ENCODE measurements at regions of chr14 and their contacts with region 1.

Region 1: DNA sequence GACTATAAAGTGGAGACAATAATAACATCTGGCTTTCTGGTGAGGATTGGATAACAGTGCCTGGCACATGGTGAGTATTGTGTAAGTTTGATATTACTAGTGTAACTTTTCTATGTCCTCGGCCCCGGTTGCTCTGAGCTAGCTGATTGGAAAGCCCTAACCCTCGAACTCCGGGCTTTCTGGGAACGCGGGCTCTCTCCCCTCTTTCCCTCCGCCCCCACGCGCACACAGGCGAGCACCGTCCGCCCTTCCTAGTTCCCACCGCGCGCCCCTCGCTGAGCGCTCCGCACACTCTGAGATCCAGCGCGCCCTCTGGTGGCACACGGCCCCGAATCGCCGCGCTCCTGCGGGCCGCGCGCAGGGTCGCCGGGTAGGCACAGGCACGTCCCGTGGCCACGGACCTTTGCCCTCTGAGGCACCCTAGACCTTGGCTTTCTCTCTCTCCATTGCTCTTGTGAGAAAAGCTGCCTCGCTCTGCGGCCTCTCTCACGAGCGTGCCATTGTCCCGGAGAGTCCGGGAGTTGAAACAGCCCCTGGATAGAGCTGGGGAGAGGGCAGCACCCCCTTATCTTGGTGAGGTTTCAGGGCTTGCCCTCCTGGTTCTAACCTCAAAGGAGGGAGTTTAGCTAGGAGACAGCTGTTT is 23.2 kb upstream of the ESRRB start:
- DNase-seq: peak; percentile 52 to 88
- H3K4me3 ChIP-seq: peak overlapping the region; percentile 15 to 45 (median 30)
- H3K27ac ChIP-seq: no peak overlapping the region
- H3K4me1 ChIP-seq: peaks cover 0 to 9% (median 8%) of the 10 kb centered on the region in 4 donors
- H3K27me3 ChIP-seq: peaks cover 0 to 44% (median 7%) of the 10 kb centered on the region in 3 donors
- CTCF ChIP-seq: peak in 5 of 7 experiments; percentile 58 to 81 (median 66)
- EP300 ChIP-seq: no peak
- POLR2A ChIP-seq: no peak

Region 2: GRCh38 chr14:76050797-76051392 is 301.9 kb before region 1 on chr14:
- intact Hi-C with region 1: loop called (anchors 5 kb)
- DNase-seq: peak; percentile 33 to 85
- H3K4me3 ChIP-seq: no peak overlapping the region
- H3K27ac ChIP-seq: no peak overlapping the region
- H3K4me1 ChIP-seq: no peaks in the 10 kb centered on the region
- H3K27me3 ChIP-seq: no peaks in the 10 kb centered on the region
- CTCF ChIP-seq: peak in 5 of 7 experiments; percentile 55 to 84 (median 69)
- EP300 ChIP-seq: no peak
- POLR2A ChIP-seq: no peak